SK-N-SH (cell line): ENCODE measurements at regions of chr16 and their contacts with region 1.

Region 1: DNA sequence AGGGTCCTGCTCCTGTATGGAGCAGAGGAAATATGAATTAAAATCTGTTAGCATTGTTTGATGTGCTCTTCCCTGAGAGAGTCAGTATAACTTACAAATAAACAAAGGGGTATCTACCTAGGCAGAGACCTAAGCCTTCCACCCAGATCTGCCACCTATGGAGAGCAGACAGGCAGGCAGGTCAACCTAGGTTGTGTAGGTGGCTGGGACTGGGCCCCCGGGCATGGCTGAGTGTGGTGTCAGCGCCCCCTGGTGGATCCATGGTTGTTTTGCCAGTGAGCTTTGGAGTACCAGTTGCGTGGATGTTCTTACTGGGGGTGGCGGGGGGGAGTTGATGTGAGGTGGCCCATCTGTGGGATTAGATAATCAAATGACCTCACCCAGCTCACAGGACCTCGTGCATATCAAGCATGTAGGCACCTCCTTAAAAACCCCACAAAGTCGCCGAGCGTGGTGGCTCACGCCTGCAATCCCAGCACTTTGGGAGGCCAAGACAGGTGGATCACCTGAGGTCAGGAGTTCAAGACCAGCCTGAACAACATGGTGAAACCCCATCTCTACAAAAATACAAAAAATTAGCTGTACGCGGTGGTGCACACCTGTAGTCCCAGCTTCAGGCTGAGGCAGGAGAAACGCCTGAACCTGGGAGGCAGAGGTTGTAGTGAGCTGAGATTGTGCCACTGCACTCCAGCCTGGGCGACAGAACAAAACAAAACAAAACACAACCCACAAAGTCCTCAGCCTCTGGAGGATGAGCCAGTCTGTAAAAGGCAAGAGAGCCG is 17.6 kb downstream of the DUS2 start:
- DNase-seq: peak; percentile 82
- H3K4me3 ChIP-seq: no peak overlapping the region
- H3K27ac ChIP-seq: no peak overlapping the region
- H3K4me1 ChIP-seq: no peaks in the 10 kb centered on the region
- H3K27me3 ChIP-seq: no peaks in the 10 kb centered on the region
- CTCF ChIP-seq: peak; percentile 91
- EP300 ChIP-seq: no peak
- RAD21 ChIP-seq: peak; percentile 84

Region 2: GRCh38 chr16:67703626-67704025 is 337.1 kb before region 1 on chr16:
- CTCF ChIA-PET with region 1: no interaction called
- POLR2A ChIA-PET with region 1: no interaction called
- DNase-seq: no peak
- H3K4me3 ChIP-seq: no peak overlapping the region
- H3K27ac ChIP-seq: no peak overlapping the region
- H3K4me1 ChIP-seq: peaks cover 0 to 7% of the 10 kb centered on the region in 2 experiments; a peak in 1 of 4 replicates
- H3K27me3 ChIP-seq: no peaks in the 10 kb centered on the region
- CTCF ChIP-seq: no peak
- EP300 ChIP-seq: no peak
- RAD21 ChIP-seq: no peak

Region 3: DNA sequence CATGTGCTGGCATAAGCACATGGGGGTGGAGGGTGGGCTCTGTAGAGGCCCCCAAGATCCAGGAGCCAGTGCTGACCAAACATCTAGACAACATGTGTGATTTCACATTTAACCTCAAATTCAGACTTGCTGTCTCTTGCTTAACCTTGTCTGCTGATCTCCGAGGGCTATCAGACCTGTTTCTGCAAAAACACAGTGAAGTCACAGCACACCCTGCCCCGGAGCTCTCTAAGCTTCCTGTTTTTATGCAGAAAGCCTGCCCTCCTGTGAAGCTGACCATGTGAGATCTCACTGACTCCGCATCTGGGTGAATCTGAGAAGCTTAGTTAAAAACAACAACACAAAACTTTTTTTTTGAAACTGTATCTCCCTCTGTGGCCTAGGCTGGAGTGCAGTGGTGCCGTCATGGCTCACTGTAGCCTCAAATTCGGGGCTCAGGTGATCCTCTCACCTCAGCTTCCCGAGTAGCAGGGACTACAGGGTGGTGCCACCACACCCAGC is 34.9 kb before region 1 on chr16:
- CTCF ChIA-PET with region 1: interaction called, 14 read pairs
- POLR2A ChIA-PET with region 1: no interaction called
- DNase-seq: no peak
- H3K4me3 ChIP-seq: no peak overlapping the region
- H3K27ac ChIP-seq: no peak overlapping the region
- H3K4me1 ChIP-seq: no peaks in the 10 kb centered on the region
- H3K27me3 ChIP-seq: no peaks in the 10 kb centered on the region
- CTCF ChIP-seq: no peak
- EP300 ChIP-seq: no peak
- RAD21 ChIP-seq: no peak

Region 4: GRCh38 chr16:68028996-68029395 is 11.7 kb before region 1 on chr16:
- CTCF ChIA-PET with region 1: interaction called, 29 read pairs
- POLR2A ChIA-PET with region 1: no interaction called
- DNase-seq: no peak
- H3K4me3 ChIP-seq: no peak overlapping the region
- H3K27ac ChIP-seq: no peak overlapping the region
- H3K4me1 ChIP-seq: no peaks in the 10 kb centered on the region; a peak in 1 of 4 replicates
- H3K27me3 ChIP-seq: no peaks in the 10 kb centered on the region
- CTCF ChIP-seq: no peak
- EP300 ChIP-seq: no peak
- RAD21 ChIP-seq: no peak

Region 5: DNA sequence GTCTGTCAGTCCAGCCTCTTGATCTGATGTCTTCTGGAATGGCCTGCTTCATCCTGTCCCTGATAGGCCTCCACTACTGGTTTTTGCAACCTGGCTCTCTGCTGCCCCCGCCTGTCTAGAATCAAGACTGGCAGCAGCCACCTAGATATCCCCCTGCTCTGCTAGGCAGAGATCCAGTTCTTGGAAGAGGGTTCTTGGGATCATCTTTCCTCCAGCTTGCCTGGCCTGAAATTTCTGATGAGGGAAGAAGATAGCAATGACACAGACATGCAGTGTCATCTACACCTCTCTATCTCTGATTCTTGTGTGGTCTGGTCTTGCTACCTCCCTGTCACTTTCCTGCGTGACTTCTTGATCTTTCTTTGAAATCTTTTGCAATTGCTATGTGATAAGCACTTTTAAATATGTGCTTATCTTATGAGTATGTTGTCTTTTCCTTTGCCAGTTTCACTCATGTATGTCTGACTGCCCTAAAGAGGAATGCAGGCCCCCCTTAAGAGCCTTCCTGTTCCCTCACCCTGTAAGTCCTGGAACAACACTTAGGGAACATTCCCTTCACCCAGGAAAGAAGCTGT is 24.2 kb after region 1 on chr16:
- CTCF ChIA-PET with region 1: interaction called, 11 read pairs
- POLR2A ChIA-PET with region 1: no interaction called
- DNase-seq: peak; percentile 77
- H3K4me3 ChIP-seq: no peak overlapping the region; a peak in 1 of 4 replicates
- H3K27ac ChIP-seq: peak overlapping the region; percentile 40 to 70; a peak in 3 of 4 replicates
- H3K4me1 ChIP-seq: peaks cover 0 to 19% of the 10 kb centered on the region in 2 experiments; a peak in 2 of 4 replicates
- H3K27me3 ChIP-seq: no peaks in the 10 kb centered on the region
- CTCF ChIP-seq: peak; percentile 86
- EP300 ChIP-seq: no peak; a peak in 1 of 4 replicates
- RAD21 ChIP-seq: peak; percentile 69

Region 6: DNA sequence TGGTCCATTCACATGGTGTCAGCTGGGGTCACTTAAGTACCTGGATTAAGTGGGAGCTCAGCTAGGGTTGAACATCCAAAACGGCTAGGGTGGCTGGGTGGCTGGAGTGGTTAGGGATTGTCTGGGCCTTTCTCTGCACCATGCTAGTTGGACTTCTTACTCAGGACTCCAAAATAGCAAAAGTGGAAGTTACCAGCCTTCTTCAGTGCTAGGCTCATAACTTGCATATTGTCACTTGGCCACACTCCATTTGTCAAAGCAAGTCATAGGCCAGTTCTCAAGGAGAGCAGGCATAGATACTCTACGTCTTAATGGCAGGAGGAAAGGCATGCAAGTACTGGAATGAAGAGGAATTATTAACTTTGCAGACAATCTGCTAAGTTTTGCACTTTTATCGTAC is 125.6 kb after region 1 on chr16:
- CTCF ChIA-PET with region 1: no interaction called
- POLR2A ChIA-PET with region 1: no interaction called
- DNase-seq: no peak
- H3K4me3 ChIP-seq: no peak overlapping the region
- H3K27ac ChIP-seq: no peak overlapping the region
- H3K4me1 ChIP-seq: no peaks in the 10 kb centered on the region
- H3K27me3 ChIP-seq: no peaks in the 10 kb centered on the region
- CTCF ChIP-seq: no peak
- EP300 ChIP-seq: no peak
- RAD21 ChIP-seq: no peak